Mammary epithelial cell (primary cell): ENCODE measurements at regions of chr1 and their contacts with region 1.

Region 1: GRCh38 chr1:179287946-179288345 is 5.7 kb upstream of the SOAT1 start:
- DNase-seq: no peak
- H3K4me3 ChIP-seq: no peak overlapping the region
- H3K27ac ChIP-seq: no peak overlapping the region
- H3K4me1 ChIP-seq: no peaks in the 10 kb centered on the region
- H3K27me3 ChIP-seq: no peaks in the 10 kb centered on the region
- CTCF ChIP-seq: no peak

Region 2: DNA sequence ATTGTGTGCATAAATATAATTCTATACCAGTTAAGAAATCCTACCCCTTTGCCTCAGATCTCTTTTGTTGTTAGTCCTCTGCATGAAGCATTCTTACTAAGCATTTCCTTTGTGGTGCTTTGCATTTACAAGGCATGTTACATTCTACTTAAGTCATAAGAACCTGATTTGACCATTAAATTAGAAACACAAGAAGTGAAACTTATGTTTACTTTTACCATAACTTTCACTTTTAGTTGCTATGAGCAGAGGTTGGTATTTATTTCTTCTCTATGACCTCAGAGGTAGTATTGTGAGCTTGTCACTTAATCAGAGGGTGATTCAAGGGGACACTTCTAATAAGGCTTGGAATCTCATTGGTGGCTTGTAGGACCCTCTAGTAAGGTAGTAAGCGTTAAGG is 253.2 kb before region 1 on chr1:
- CTCF ChIA-PET with region 1: no interaction called
- dilution Hi-C with region 1: no loop called
- in situ Hi-C with region 1: no loop called
- intact Hi-C with region 1: no loop called
- DNase-seq: no peak
- H3K4me3 ChIP-seq: no peak overlapping the region
- H3K27ac ChIP-seq: no peak overlapping the region
- H3K4me1 ChIP-seq: peaks cover 43% of the 10 kb centered on the region
- H3K27me3 ChIP-seq: no peaks in the 10 kb centered on the region
- CTCF ChIP-seq: no peak

Region 3: DNA sequence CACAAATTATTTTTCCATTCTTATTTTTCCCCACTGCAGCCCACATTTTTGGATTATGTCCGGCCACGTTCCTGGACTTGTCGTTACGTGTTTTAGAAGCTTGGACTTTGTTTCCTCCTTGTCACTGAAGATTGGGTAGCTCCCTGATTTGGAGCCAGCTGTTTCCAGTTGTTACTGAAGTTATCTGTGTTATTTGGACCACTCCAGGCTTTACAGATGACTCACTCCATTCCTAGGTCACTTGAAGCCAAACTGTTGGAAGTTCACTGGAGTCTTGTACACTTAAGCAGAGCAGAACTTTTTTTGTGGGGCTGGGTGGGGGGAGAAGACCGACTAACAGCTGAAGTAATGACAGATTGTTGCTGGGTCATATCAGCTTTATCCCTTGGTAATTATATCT is 65.6 kb after region 1 on chr1:
- CTCF ChIA-PET with region 1: no interaction called
- dilution Hi-C with region 1: loop called (anchors 10 kb)
- in situ Hi-C with region 1: no loop called
- intact Hi-C with region 1: no loop called
- DNase-seq: peak; percentile 21
- H3K4me3 ChIP-seq: no peak overlapping the region
- H3K27ac ChIP-seq: no peak overlapping the region
- H3K4me1 ChIP-seq: peaks cover 8% of the 10 kb centered on the region
- H3K27me3 ChIP-seq: no peaks in the 10 kb centered on the region
- CTCF ChIP-seq: no peak

Region 4: GRCh38 chr1:179384027-179384426 is 96.1 kb after region 1 on chr1:
- CTCF ChIA-PET with region 1: no interaction called
- dilution Hi-C with region 1: no loop called
- in situ Hi-C with region 1: no loop called
- intact Hi-C with region 1: no loop called
- DNase-seq: no peak
- H3K4me3 ChIP-seq: no peak overlapping the region
- H3K27ac ChIP-seq: no peak overlapping the region
- H3K4me1 ChIP-seq: no peaks in the 10 kb centered on the region
- H3K27me3 ChIP-seq: no peaks in the 10 kb centered on the region
- CTCF ChIP-seq: no peak